ENCODE measurements at regions of chr7 and their contacts with region 1.

Region 1: DNA sequence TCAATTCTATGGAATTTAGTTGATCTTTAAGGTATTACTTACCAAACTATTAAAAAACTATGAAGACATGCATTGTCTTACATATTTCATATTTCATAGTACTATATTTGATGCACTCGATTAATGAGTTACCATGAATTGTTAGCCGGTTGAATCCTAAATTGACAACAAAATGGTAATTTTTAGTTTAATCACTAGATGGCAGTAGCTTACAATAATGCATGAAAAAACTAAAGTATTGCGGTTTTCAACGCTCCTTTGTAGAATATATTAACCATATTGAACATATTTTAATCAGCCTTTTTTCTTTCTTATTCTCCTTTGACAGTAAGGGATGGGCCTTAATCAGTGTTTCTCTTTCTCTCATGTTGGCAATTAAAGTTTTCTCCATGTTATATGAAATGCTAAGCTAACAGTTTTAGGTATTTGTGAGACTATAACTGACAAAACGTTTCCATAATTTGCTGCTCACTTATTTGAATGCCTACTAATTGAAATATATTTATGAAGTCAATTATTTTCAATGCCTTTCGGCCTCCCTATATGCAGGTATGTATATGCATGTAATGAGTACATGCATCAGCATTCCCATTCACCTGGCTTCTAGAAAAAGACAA is 48.5 kb upstream of the ARL4A start:
- DNase-seq: peak; percentile 19 to 46 (median 24)
- ATAC-seq: peak; percentile 61
- H3K4me3 ChIP-seq: no peak overlapping the region
- H3K27ac ChIP-seq: no peak overlapping the region
- H3K4me1 ChIP-seq: no peaks in the 10 kb centered on the region; a peak in 4 of 5 replicates
- H3K27me3 ChIP-seq: no peaks in the 10 kb centered on the region
- CTCF ChIP-seq: peak in 2 of 3 experiments; percentile 44 to 78; a peak in 4 of 6 replicates
- EP300 ChIP-seq: no peak
- POLR2A ChIP-seq: no peak
- RAD21 ChIP-seq: peak; percentile 86 to 90

Region 2: DNA sequence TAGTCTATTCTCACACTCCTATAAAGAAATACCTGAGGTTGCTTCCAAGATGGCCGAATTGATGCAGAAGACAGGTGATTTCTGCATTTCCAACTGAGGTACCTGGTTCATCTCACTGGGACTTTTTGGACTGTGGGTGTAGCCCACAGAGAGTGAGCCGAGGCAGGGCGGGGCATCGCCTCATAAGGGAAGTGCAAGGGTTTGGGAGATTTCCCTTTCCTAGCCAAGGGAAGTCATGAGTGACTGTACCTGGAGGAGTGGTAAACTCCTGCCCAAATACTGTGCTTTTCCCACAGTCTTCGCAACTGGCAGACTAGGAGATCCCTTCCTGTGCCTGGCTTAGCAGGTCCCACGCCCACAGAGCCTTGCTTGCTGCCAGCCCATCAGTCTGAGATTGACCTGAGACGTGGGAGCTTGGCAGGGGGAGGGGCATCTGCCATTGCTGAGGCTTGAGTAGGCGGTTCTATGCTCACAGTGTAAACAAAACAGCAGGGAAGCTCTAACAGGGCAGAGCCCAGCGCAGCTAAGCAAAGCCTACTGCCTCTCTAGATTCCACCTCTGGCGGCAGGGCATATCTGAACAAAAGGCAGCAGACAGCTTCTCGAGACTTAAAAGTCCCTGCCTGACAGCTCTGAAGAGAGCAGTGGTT is 200.7 kb after region 1 on chr7:
- CTCF ChIA-PET with region 1: no interaction called
- POLR2A ChIA-PET with region 1: no interaction called
- in situ Hi-C with region 1: no loop called
- intact Hi-C with region 1: no loop called
- DNase-seq: no peak
- ATAC-seq: no peak; the same call in 2 of the 3 replicates
- H3K4me3 ChIP-seq: no peak overlapping the region
- H3K27ac ChIP-seq: no peak overlapping the region
- H3K4me1 ChIP-seq: peaks cover 0 to 2% of the 10 kb centered on the region in 2 experiments; a peak in 2 of 5 replicates
- H3K27me3 ChIP-seq: no peaks in the 10 kb centered on the region
- CTCF ChIP-seq: no peak
- EP300 ChIP-seq: no peak
- POLR2A ChIP-seq: no peak
- RAD21 ChIP-seq: no peak

Region 3: GRCh38 chr7:12951397-12951801 is 312.4 kb after region 1 on chr7:
- CTCF ChIA-PET with region 1: no interaction called
- POLR2A ChIA-PET with region 1: no interaction called
- in situ Hi-C with region 1: no loop called
- intact Hi-C with region 1: loop called (anchors 5 kb)
- DNase-seq: peak in 2 of 4 experiments; percentile 51 to 57
- ATAC-seq: peak; percentile 84
- H3K4me3 ChIP-seq: no peak overlapping the region
- H3K27ac ChIP-seq: peak overlapping the region; percentile 64; the same call in 2 of the 3 replicates
- H3K4me1 ChIP-seq: peaks cover 0 to 10% of the 10 kb centered on the region in 2 experiments; a peak in 3 of 5 replicates
- H3K27me3 ChIP-seq: no peaks in the 10 kb centered on the region
- CTCF ChIP-seq: no peak
- EP300 ChIP-seq: peak; percentile 86
- POLR2A ChIP-seq: no peak
- RAD21 ChIP-seq: peak in 1 of 2 experiments; percentile 6; a peak in 1 of 4 replicates

Region 4: DNA sequence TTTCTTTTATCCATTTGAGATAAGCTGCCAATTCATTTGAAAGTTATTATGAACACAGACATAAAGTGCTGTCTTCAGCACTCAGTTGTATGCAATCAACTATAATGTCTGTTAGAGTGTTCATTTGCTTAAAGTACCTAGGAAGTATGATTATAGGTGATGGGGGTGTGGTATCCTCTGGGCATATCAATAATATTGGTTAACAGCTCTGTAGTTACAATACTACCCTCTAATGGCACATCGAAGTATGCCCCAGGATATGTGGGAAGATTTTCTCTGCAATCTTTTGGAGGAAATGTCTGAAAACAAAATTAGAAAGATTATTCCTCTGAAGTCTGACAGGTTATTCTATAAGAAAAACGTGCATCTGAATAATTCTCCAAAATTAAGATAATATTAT is 478.1 kb after region 1 on chr7:
- CTCF ChIA-PET with region 1: no interaction called
- POLR2A ChIA-PET with region 1: no interaction called
- in situ Hi-C with region 1: no loop called
- intact Hi-C with region 1: loop called (anchors 5 kb)
- DNase-seq: peak in 1 of 4 experiments; percentile 22
- ATAC-seq: peak; percentile 64; the same call in 1 of the 3 replicates
- H3K4me3 ChIP-seq: no peak overlapping the region
- H3K27ac ChIP-seq: no peak overlapping the region
- H3K4me1 ChIP-seq: peaks cover 0 to 11% of the 10 kb centered on the region in 2 experiments; a peak in 2 of 5 replicates
- H3K27me3 ChIP-seq: no peaks in the 10 kb centered on the region
- CTCF ChIP-seq: peak; percentile 16 to 48 (median 28); a peak in 2 of 6 replicates
- EP300 ChIP-seq: no peak
- POLR2A ChIP-seq: no peak
- RAD21 ChIP-seq: peak; percentile 65 to 78